ENCODE measurements at regions of chr1 and their contacts with region 1.

Region 1: DNA sequence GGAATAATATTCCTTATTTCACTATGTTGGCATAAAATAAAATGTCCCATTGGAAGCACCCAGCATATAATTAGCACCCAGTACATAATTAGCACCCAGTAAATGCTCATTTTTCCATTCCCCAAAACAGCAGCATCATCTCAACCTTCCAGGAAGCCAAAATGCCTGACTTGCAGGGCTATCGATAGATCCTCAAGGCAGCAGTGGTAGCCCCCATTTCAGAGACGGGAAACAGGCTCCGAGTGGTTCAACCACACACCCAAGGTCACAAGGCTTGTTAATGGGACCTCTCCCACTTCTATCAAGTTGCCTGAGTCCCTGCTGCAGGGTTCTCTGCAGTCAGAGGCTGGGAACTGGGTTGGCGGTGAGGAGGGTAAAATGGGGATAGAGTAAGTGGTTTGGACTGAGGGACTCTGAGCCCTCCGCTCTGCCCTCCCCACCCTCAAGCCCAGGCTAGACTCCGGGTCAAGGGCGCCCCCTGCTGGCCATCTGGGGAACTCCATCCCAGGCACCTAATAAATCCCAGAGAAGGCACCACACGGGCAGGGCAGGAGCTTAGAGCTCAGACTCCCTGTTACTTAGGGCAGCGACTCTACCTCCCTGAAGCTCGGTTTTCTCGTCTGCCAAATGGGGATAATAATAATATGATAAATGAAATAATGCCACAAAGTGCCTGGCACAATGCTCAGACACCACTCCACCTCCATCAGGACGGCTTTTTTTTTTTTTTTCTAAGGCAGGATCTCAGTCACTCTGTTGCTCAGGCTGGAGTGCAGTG is 21.9 kb upstream of the LAPTM5 start:
- DNase-seq: peak; percentile 97
- ATAC-seq: peak; percentile 89
- H3K4me3 Mint-ChIP-seq: no peak overlapping the region
- H3K27ac Mint-ChIP-seq: no peak overlapping the region
- H3K4me1 Mint-ChIP-seq: peaks cover 16% of the 10 kb centered on the region
- H3K27me3 Mint-ChIP-seq: no peaks in the 10 kb centered on the region
- CTCF ChIP-seq: peak; percentile 92

Region 2: GRCh38 chr1:30724175-30724574 is 55.3 kb before region 1 on chr1:
- CTCF ChIA-PET with region 1: interaction called, 283 read pairs
- POLR2A ChIA-PET with region 1: interaction called, 40 read pairs
- intact Hi-C with region 1: loop called (anchors 1 kb)
- DNase-seq: no peak
- ATAC-seq: no peak
- H3K4me3 Mint-ChIP-seq: no peak overlapping the region
- H3K27ac Mint-ChIP-seq: no peak overlapping the region
- H3K4me1 Mint-ChIP-seq: peaks cover 34% of the 10 kb centered on the region
- H3K27me3 Mint-ChIP-seq: no peaks in the 10 kb centered on the region
- CTCF ChIP-seq: peak; percentile 30

Region 3: GRCh38 chr1:30743584-30744059 is 35.9 kb before region 1 on chr1:
- CTCF ChIA-PET with region 1: interaction called, 35 read pairs
- POLR2A ChIA-PET with region 1: interaction called, 3 read pairs
- intact Hi-C with region 1: loop called (anchors 5 kb)
- DNase-seq: peak; percentile 85
- ATAC-seq: peak; percentile 71
- H3K4me3 Mint-ChIP-seq: peak overlapping the region; percentile 55
- H3K27ac Mint-ChIP-seq: peak overlapping the region; percentile 98
- H3K4me1 Mint-ChIP-seq: peaks cover 96% of the 10 kb centered on the region
- H3K27me3 Mint-ChIP-seq: no peaks in the 10 kb centered on the region
- CTCF ChIP-seq: no peak

Region 4: GRCh38 chr1:30763651-30764248 is 15.7 kb before region 1 on chr1:
- CTCF ChIA-PET with region 1: interaction called, 186 read pairs
- POLR2A ChIA-PET with region 1: interaction called, 7 read pairs
- intact Hi-C with region 1: no loop called
- DNase-seq: no peak
- ATAC-seq: no peak
- H3K4me3 Mint-ChIP-seq: no peak overlapping the region
- H3K27ac Mint-ChIP-seq: peak overlapping the region; percentile 81
- H3K4me1 Mint-ChIP-seq: peaks cover 90% of the 10 kb centered on the region
- H3K27me3 Mint-ChIP-seq: no peaks in the 10 kb centered on the region
- CTCF ChIP-seq: no peak

Region 5: DNA sequence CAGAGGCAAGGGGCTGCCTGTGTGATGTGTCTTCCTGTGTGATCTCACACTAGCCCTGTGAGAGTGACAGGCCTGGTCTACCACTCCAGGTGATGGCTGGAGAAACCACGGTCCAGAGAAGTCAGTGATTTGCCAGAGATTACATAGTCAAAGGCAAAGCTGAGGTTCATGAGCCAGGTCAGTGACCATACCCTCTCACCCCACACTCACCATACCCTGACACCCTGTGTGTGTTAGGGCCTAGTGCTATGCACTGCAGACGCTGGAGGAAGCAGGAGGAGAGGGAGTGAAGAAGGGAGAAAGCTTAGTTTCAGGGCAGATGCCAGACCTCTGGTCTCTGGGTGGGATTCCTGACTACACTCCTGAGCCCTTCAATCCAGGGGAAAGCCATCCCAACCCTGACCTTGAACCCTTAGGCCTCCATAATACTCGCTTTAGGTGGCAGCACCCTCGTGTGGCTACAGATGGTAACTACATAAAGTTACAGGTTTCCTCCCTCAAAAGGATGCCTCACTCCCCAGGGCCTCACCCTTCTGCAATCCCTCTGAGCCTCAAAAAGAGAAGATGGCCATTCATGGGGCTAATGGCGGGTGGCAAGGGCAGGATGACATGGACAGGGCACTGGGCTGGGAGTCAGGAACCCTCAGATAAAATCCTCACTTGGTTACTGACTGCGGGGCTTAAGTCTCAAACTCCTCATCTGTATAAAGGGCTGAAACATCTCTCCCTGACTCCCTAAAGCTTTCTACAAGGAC is 149.8 kb after region 1 on chr1:
- CTCF ChIA-PET with region 1: interaction called, 29 read pairs
- POLR2A ChIA-PET with region 1: no interaction called
- intact Hi-C with region 1: no loop called
- DNase-seq: peak; percentile 70
- ATAC-seq: peak; percentile 88
- H3K4me3 Mint-ChIP-seq: no peak overlapping the region
- H3K27ac Mint-ChIP-seq: no peak overlapping the region
- H3K4me1 Mint-ChIP-seq: peaks cover 5% of the 10 kb centered on the region
- H3K27me3 Mint-ChIP-seq: no peaks in the 10 kb centered on the region
- CTCF ChIP-seq: peak; percentile 82

Region 6: GRCh38 chr1:30998887-30999286 is 219.4 kb after region 1 on chr1:
- CTCF ChIA-PET with region 1: no interaction called
- POLR2A ChIA-PET with region 1: no interaction called
- intact Hi-C with region 1: no loop called
- DNase-seq: no peak
- ATAC-seq: no peak
- H3K4me3 Mint-ChIP-seq: no peak overlapping the region
- H3K27ac Mint-ChIP-seq: peak overlapping the region; percentile 43
- H3K4me1 Mint-ChIP-seq: peaks cover 40% of the 10 kb centered on the region
- H3K27me3 Mint-ChIP-seq: no peaks in the 10 kb centered on the region
- CTCF ChIP-seq: no peak

Region 7: GRCh38 chr1:31016868-31017267 is 237.4 kb after region 1 on chr1:
- CTCF ChIA-PET with region 1: no interaction called
- POLR2A ChIA-PET with region 1: no interaction called
- intact Hi-C with region 1: no loop called
- DNase-seq: no peak
- ATAC-seq: no peak
- H3K4me3 Mint-ChIP-seq: no peak overlapping the region
- H3K27ac Mint-ChIP-seq: peak overlapping the region; percentile 44
- H3K4me1 Mint-ChIP-seq: peaks cover 71% of the 10 kb centered on the region
- H3K27me3 Mint-ChIP-seq: no peaks in the 10 kb centered on the region
- CTCF ChIP-seq: no peak